Naive thymus-derived CD4-positive, alpha-beta T cell (primary cell): ENCODE measurements at regions of chr10 and their contacts with region 1.

Region 1: DNA sequence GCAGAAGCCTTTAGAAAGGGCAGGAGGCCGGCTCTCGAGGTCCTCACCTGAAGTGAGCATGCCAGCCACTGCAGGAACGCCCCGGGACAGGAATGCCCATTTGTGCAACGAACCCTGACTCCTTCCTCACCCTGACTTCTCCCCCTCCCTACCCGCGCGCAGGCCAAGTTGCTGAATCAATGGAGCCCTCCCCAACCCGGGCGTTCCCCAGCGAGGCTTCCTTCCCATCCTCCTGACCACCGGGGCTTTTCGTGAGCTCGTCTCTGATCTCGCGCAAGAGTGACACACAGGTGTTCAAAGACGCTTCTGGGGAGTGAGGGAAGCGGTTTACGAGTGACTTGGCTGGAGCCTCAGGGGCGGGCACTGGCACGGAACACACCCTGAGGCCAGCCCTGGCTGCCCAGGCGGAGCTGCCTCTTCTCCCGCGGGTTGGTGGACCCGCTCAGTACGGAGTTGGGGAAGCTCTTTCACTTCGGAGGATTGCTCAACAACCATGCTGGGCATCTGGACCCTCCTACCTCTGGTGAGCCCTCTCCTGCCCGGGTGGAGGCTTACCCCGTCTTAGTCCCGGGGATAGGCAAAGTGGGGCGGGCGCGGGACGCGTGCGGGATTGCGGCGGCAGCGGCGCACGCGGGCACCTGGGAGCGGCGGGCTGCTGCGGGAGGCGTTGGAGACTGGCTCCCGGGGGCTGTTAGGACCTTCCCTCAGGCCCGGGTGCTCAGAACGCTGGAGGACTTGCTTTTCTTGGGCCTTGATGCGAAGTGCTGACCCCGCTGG is at the start of gene FAS:
- DNase-seq: peak; percentile 50 to 81 (median 61)
- ATAC-seq: peak; percentile 86
- H3K4me3 ChIP-seq: peak within 1 kb of the TSS; percentile 86
- H3K4me3 Mint-ChIP-seq: peak within 1 kb of the TSS; percentile 92 to 100 (median 96)
- H3K27ac ChIP-seq: peak within 1 kb of the TSS; percentile 77
- H3K27ac Mint-ChIP-seq: peak within 1 kb of the TSS; percentile 91 to 96 (median 94)
- H3K4me1 ChIP-seq: peaks cover 42 to 45% of the 10 kb centered on the region in 2 donors
- H3K4me1 Mint-ChIP-seq: peaks cover 41 to 83% (median 68%) of the 10 kb centered on the region in 7 donors
- H3K27me3 ChIP-seq: no peaks in the 10 kb centered on the region
- H3K27me3 Mint-ChIP-seq: no peaks in the 10 kb centered on the region
- total RNA-seq, gene FAS: 5.6 to 67.4 (median 8.3) TPM

Region 2: GRCh38 chr10:87504640-87505365 is 1485.8 kb before region 1 on chr10 and contains the start of gene MINPP1:
- CTCF ChIA-PET with region 1: no interaction called
- POLR2A ChIA-PET with region 1: no interaction called
- intact Hi-C with region 1: loop called in 1 of 2 experiments (anchors 10 kb)
- DNase-seq: peak; percentile 38 to 86 (median 48)
- ATAC-seq: peak; percentile 80
- H3K4me3 ChIP-seq: peak within 1 kb of the TSS; percentile 87
- H3K4me3 Mint-ChIP-seq: peak within 1 kb of the TSS; percentile 86 to 97 (median 92)
- H3K27ac ChIP-seq: peak within 1 kb of the TSS; percentile 59
- H3K27ac Mint-ChIP-seq: peak within 1 kb of the TSS; percentile 54 to 93 (median 75)
- H3K4me1 ChIP-seq: peaks cover 12 to 13% of the 10 kb centered on the region in 2 donors
- H3K4me1 Mint-ChIP-seq: peaks cover 23 to 56% (median 39%) of the 10 kb centered on the region in 7 donors
- H3K27me3 ChIP-seq: no peaks in the 10 kb centered on the region
- H3K27me3 Mint-ChIP-seq: peaks cover 0 to 24% (median 0%) of the 10 kb centered on the region in 5 donors
- total RNA-seq, gene MINPP1: 1.8 to 9.5 (median 9.2) TPM

Region 3: DNA sequence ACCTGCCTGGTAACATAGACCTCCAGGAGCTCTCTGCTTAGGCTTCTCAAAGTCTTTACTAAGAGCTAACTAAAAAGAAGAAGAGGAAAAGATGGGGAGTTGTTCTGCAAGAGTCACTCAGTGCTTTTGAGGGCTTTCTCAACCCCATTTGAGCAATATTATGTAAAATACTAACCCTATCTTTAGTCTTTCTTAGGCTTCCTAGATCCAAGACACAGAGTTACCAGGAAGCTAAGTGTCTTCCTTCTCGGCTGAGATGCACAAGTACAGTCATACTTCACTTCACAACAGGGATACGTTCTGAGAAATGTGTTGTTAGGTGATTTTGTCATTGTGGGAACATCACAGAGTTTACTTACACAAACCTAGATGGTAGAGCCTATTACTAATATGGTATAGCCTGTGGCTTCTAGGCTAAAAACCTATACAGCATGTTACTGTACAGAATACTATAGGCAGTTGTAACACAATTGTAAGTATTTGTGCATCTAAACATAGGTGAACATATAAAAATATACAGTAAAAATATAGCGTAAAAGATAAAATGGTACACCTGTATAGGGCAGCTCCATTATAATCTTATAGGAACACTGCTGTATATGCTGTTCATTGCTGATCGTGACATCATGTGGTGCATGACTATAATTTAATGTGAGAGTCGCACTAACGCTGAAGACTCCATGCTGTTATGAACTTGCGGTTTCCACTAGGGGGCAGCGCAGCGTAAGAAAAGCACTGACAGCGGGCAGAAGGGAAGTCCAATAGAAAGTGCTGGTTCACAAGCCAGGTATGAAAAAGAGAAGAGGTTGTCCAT is 155.3 kb before region 1 on chr10:
- CTCF ChIA-PET with region 1: interaction called, 3 read pairs
- POLR2A ChIA-PET with region 1: interaction called, 3 read pairs
- intact Hi-C with region 1: loop called in 1 of 2 experiments (anchors 5 kb)
- DNase-seq: peak; percentile 65 to 86 (median 82)
- ATAC-seq: peak; percentile 95
- H3K4me3 ChIP-seq: no peak overlapping the region
- H3K4me3 Mint-ChIP-seq: no peak overlapping the region
- H3K27ac ChIP-seq: no peak overlapping the region
- H3K27ac Mint-ChIP-seq: no peak overlapping the region
- H3K4me1 ChIP-seq: peaks cover 14 to 46% of the 10 kb centered on the region in 2 donors
- H3K4me1 Mint-ChIP-seq: peaks cover 10 to 33% (median 32%) of the 10 kb centered on the region in 7 donors
- H3K27me3 ChIP-seq: no peaks in the 10 kb centered on the region
- H3K27me3 Mint-ChIP-seq: no peaks in the 10 kb centered on the region

Region 4: GRCh38 chr10:88962336-88962735 is 28.2 kb before region 1 on chr10:
- CTCF ChIA-PET with region 1: no interaction called
- POLR2A ChIA-PET with region 1: interaction called, 8 read pairs
- intact Hi-C with region 1: loop called in 1 of 2 experiments (anchors 1 kb)
- DNase-seq: peak in 6 of 9 donors; percentile 8 to 47 (median 39)
- ATAC-seq: peak; percentile 75
- H3K4me3 ChIP-seq: no peak overlapping the region
- H3K4me3 Mint-ChIP-seq: peak overlapping the region in 8 of 10 donors; percentile 34 to 80 (median 60)
- H3K27ac ChIP-seq: no peak overlapping the region
- H3K27ac Mint-ChIP-seq: peak overlapping the region in 4 of 9 donors; percentile 1 to 32 (median 21)
- H3K4me1 ChIP-seq: peaks cover 10 to 20% of the 10 kb centered on the region in 2 donors
- H3K4me1 Mint-ChIP-seq: peaks cover 16 to 28% (median 26%) of the 10 kb centered on the region in 7 donors
- H3K27me3 ChIP-seq: no peaks in the 10 kb centered on the region
- H3K27me3 Mint-ChIP-seq: peaks cover 0 to 2% (median 0%) of the 10 kb centered on the region in 5 donors

Region 5: DNA sequence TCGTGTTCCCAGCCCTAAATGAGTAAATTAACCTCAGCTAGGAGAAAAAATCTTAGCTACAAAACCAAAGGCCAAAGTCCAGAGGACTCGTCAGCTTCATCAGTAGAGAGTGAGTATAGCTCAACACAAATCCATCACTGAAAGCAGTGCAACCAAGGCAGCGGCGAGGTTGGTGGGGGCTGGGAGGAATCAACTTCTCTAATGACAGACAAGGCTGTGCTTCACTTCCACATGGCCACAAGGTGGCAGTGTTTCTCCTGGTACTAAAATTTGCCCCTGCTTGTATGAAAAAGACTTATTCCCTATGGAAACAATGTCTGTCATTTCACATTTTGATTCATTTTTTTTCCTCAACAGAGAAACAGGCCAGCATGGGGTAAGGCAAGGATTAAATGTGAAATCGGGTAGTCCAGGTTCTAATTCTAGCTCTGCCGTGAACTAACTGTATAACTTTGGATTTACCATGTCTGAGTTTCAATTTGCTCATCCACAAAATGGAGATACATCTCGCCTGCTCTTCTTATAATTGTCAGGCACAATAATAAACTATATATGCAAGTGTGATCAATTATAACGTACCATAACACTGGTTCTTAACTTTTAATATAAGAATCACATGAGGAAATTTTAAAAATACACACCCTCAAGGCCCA is 39.3 kb after region 1 on chr10:
- CTCF ChIA-PET with region 1: no interaction called
- POLR2A ChIA-PET with region 1: no interaction called
- intact Hi-C with region 1: loop called in 1 of 2 experiments (anchors 2 kb)
- DNase-seq: peak; percentile 37 to 68 (median 53)
- ATAC-seq: peak; percentile 85
- H3K4me3 ChIP-seq: no peak overlapping the region
- H3K4me3 Mint-ChIP-seq: peak overlapping the region in 1 of 10 donors; percentile 30
- H3K27ac ChIP-seq: no peak overlapping the region
- H3K27ac Mint-ChIP-seq: no peak overlapping the region
- H3K4me1 ChIP-seq: no peaks in the 10 kb centered on the region
- H3K4me1 Mint-ChIP-seq: peaks cover 0 to 31% (median 0%) of the 10 kb centered on the region in 7 donors
- H3K27me3 ChIP-seq: no peaks in the 10 kb centered on the region
- H3K27me3 Mint-ChIP-seq: no peaks in the 10 kb centered on the region

Region 6: GRCh38 chr10:89202033-89202425 is 211.5 kb after region 1 on chr10:
- CTCF ChIA-PET with region 1: no interaction called
- POLR2A ChIA-PET with region 1: no interaction called
- intact Hi-C with region 1: no loop called
- DNase-seq: no peak
- ATAC-seq: no peak
- H3K4me3 ChIP-seq: no peak overlapping the region
- H3K4me3 Mint-ChIP-seq: no peak overlapping the region
- H3K27ac ChIP-seq: no peak overlapping the region
- H3K27ac Mint-ChIP-seq: no peak overlapping the region
- H3K4me1 ChIP-seq: no peaks in the 10 kb centered on the region
- H3K4me1 Mint-ChIP-seq: peaks cover 7 to 10% (median 9%) of the 10 kb centered on the region in 7 donors
- H3K27me3 ChIP-seq: peaks cover 0 to 5% of the 10 kb centered on the region in 2 donors
- H3K27me3 Mint-ChIP-seq: peaks cover 0 to 20% (median 18%) of the 10 kb centered on the region in 5 donors

Region 7: DNA sequence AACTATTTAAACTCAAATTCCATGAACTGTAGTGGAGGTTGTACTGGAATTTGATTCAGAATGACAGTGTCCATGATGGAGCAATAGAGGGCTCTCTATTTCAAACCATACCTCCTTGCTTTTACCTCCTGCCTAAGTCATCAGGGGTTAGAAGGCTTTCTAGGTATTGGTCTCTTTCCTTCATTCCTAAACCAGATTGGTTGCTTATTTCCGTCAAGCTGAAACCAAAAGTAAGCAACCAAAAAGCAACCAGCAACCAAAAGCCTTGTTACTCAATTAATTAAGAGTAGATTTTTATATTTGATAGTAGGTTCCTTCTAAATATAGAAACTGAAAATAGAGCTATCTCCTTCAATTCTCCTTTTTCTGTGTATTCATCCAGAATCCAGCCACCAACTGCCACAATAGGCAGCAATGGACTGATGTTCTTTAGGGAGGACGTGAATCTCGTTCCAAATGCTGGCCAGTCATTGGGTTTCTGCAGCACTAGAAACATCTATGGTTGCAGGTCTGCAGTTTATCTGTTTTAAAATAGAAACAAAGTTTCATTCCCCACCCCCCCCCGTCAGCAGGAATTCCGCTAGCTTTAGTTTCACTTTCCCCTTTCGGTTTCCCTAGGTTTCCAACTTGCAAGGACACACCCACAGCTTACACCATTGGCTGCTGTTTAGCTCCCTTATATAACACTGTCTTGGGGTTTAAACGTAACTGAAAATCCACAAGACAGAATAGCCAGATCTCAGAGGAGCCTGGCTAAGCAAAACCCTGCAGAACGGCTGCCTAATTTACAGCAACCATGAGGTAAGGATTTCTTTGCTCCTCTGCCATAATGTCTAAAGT is 401.6 kb after region 1 on chr10 and contains the start of gene IFIT1:
- CTCF ChIA-PET with region 1: no interaction called
- POLR2A ChIA-PET with region 1: no interaction called
- intact Hi-C with region 1: loop called in 1 of 2 experiments (anchors 5 kb)
- DNase-seq: peak in 8 of 9 donors; percentile 36 to 84 (median 72)
- ATAC-seq: peak; percentile 96
- H3K4me3 ChIP-seq: peak within 1 kb of the TSS; percentile 82
- H3K4me3 Mint-ChIP-seq: peak within 1 kb of the TSS; percentile 85 to 96 (median 90)
- H3K27ac ChIP-seq: peak within 1 kb of the TSS; percentile 72
- H3K27ac Mint-ChIP-seq: peak within 1 kb of the TSS; percentile 87 to 97 (median 93)
- H3K4me1 ChIP-seq: peaks cover 14 to 19% of the 10 kb centered on the region in 2 donors
- H3K4me1 Mint-ChIP-seq: peaks cover 14 to 53% (median 45%) of the 10 kb centered on the region in 7 donors
- H3K27me3 ChIP-seq: no peaks in the 10 kb centered on the region
- H3K27me3 Mint-ChIP-seq: peaks cover 0 to 6% (median 0%) of the 10 kb centered on the region in 5 donors
- total RNA-seq, gene IFIT1: 1.7 to 15.7 (median 6.5) TPM